Esophagus squamous epithelium (tissue), 5 donors: ENCODE measurements at regions of chr18 and their contacts with region 1.

Region 1: DNA sequence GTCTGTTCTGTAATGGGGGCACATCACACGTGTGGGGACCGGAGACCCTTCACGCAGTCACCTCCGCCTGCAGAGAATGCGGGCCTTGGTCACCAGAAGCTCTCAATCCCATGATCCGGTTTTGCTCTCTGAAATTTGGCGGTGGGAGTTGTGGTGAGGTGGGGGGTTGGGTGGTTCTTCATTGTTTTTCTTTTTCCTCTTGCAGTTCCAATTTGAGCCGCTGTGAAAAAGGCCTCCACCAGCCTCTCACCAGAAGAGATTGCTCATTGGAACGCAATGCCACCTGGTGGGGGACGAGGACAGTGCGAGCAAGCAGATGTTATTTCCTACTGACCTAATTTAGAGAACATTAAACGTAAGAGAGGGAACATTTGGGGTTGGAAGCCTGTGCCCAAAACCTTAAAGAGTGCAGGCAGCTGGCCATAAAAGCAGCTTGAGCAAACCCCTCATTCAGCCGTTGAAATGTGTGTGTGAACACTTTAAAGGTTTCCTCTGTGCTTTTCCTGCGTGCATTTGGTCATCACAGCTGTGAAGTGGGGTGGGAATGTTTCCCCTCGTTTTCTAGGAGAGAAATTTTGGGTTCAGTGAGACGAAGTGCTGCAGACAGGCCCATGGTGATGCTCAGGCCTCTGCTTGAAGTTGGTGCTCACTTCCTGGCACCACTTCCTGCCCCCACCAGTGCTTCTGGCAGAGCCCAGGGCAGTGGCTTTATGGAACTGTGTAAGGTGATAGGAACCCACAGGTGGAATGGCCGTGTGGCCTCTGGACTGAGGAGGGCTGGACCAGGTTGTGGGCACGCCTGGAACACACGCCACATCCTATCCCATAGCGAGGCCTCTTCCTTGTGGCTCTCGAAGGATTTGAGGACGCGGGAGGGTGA is 61.7 kb downstream of the ZCCHC2 start:
- DNase-seq: peak; percentile 32
- H3K4me3 ChIP-seq: peak overlapping the region in 1 of 4 donors; percentile 15
- H3K27ac ChIP-seq: peak overlapping the region in 2 of 4 donors; percentile 23 to 25
- H3K4me1 ChIP-seq: peaks cover 0 to 24% (median 9%) of the 10 kb centered on the region in 3 donors
- H3K27me3 ChIP-seq: no peaks in the 10 kb centered on the region
- CTCF ChIP-seq: peak; percentile 96 to 99 (median 98)
- POLR2A ChIP-seq: no peak

Region 2: GRCh38 chr18:62425465-62426195 is 158.9 kb before region 1 on chr18:
- intact Hi-C with region 1: loop called (anchors 5 kb)
- DNase-seq: no peak
- H3K4me3 ChIP-seq: peak overlapping the region in 3 of 4 donors; percentile 32 to 41 (median 33)
- H3K27ac ChIP-seq: peak overlapping the region; percentile 43 to 82 (median 73)
- H3K4me1 ChIP-seq: peaks cover 0 to 22% (median 3%) of the 10 kb centered on the region in 3 donors
- H3K27me3 ChIP-seq: peaks cover 0 to 66% (median 0%) of the 10 kb centered on the region in 4 donors
- CTCF ChIP-seq: peak in 5 of 6 experiments; percentile 80 to 92 (median 91)
- POLR2A ChIP-seq: no peak

Region 3: GRCh38 chr18:62445386-62445917 is 139.0 kb before region 1 on chr18:
- intact Hi-C with region 1: no loop called
- DNase-seq: no peak
- H3K4me3 ChIP-seq: no peak overlapping the region
- H3K27ac ChIP-seq: no peak overlapping the region
- H3K4me1 ChIP-seq: peaks cover 0 to 2% (median under 1%) of the 10 kb centered on the region in 3 donors
- H3K27me3 ChIP-seq: peaks cover 0 to 30% (median 0%) of the 10 kb centered on the region in 4 donors
- CTCF ChIP-seq: no peak
- POLR2A ChIP-seq: no peak

Region 4: DNA sequence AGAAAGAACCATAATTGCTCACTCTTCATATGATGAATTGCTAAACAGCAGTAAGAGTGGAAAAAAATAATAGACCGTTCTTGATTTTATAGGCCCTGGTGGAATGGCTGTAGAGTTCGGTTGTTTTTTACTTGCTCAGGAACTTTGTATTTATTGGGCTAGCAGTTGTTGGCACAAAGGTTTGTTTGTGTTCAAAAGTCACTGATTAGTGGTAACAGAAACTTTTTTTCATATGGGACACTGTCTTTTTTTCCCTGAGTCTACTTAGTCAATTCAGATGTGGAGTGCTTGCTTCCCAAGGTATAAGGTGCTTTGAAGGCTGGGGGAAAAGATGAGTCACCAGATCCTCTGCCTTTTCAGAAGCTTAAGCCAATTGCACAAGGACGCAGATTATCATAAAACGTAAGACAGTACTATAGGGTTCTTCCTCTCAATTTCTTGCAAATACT is 156.7 kb after region 1 on chr18:
- intact Hi-C with region 1: no loop called
- DNase-seq: no peak
- H3K4me3 ChIP-seq: no peak overlapping the region
- H3K27ac ChIP-seq: peak overlapping the region; percentile 26 to 66 (median 52)
- H3K4me1 ChIP-seq: peaks cover 4 to 53% (median 21%) of the 10 kb centered on the region in 3 donors
- H3K27me3 ChIP-seq: no peaks in the 10 kb centered on the region
- CTCF ChIP-seq: no peak
- POLR2A ChIP-seq: no peak

Region 5: GRCh38 chr18:62982600-62983251 is 398.2 kb after region 1 on chr18:
- intact Hi-C with region 1: loop called (anchors 10 kb)
- DNase-seq: no peak
- H3K4me3 ChIP-seq: peak overlapping the region in 2 of 4 donors; percentile 23 to 49
- H3K27ac ChIP-seq: no peak overlapping the region
- H3K4me1 ChIP-seq: peaks cover 4 to 13% (median 4%) of the 10 kb centered on the region in 3 donors
- H3K27me3 ChIP-seq: no peaks in the 10 kb centered on the region
- CTCF ChIP-seq: peak; percentile 62 to 77 (median 70)
- POLR2A ChIP-seq: no peak